Right ventricle myocardium inferior (tissue), 1 donor: ENCODE measurements at regions of chr20 and their contacts with region 1.

Region 1: GRCh38 chr20:52791091-52791490 is 181.1 kb upstream of the TSHZ2 start:
- DNase-seq: no peak
- ATAC-seq: peak; percentile 88

Region 2: DNA sequence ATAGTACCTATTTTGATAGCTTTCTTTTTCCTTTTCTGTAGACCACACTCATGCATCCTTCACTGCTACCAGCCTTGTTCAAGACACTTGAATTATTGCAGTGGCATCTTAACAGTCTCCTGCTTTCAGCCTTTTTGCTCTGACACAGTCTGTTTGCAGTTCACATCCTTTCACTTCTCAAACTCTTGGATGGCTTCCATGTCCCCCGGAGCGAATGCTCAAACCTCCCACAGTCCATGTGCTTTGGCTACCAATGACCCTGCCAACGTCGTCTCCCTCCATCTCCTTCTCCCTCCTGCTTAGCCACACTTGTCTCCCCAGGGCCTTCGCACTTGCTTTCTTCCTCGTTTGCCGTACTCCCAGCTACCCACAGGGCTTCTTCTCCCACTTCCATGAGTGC is 329.5 kb before region 1 on chr20:
- intact Hi-C with region 1: no loop called
- DNase-seq: no peak
- ATAC-seq: no peak

Region 3: DNA sequence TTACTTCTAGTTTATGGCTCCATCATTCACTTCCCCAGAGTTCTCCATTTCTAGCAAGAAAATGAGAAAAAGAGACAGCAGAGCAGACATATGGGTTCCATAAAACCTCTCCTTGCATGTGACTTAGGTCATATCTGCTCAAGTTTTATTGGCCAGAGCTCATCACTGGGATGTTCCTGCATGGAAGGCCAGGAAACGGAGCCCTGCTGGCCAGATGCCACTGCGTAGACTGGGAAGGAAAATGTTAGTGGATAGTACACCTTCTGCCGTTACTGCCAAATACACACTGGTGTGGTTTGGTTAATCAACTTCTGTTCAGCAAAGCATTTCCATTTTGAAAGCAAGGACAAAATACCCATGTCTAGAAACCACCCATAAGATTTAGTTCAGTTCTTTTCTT is 39.5 kb before region 1 on chr20:
- intact Hi-C with region 1: loop called (anchors 5 kb)
- DNase-seq: no peak
- ATAC-seq: no peak